Activated T-helper 2 cell treated with anti-CD3 and anti-CD28 coated beads, Interferon-gamma antibody, Interleukin-2, Interleukin-4, amounts not matched to agents 10 μg/mL and 5 μg/mL and 100 μg/mL, durations not matched to agents 14 hours and 24 hours and 36 hours (primary cell): ENCODE measurements at regions of chr18 and their contacts with region 1.

Region 1: DNA sequence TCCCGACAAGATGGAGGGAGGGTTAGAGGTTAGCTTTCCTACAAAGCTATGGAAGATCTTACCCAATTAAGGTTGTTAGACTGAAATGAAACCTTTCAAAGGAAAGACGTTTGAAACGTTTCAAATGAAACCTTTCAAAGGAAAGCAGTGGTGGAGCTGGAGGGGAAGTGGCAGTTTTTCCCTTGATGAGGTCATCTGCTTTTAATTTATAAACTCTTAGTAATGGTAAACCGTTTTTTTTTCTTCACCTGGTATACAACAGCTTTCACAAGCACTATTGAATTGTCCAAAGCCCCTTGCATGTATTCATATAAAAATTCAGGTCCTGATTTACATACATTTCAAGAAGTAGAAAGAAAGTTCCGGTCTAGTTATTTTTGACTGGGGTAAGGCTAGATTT is 7.4 kb downstream of the PMAIP1 start:
- DNase-seq: no peak
- H3K4me3 Mint-ChIP-seq: peak overlapping the region; percentile 14
- H3K27ac Mint-ChIP-seq: peak overlapping the region; percentile 77
- H3K4me1 Mint-ChIP-seq: peaks cover 64% of the 10 kb centered on the region
- H3K27me3 Mint-ChIP-seq: no peaks in the 10 kb centered on the region

Region 2: GRCh38 chr18:59041819-59042815 is 865.1 kb before region 1 on chr18:
- intact Hi-C with region 1: no loop called
- DNase-seq: no peak
- H3K4me3 Mint-ChIP-seq: no peak overlapping the region
- H3K27ac Mint-ChIP-seq: no peak overlapping the region
- H3K4me1 Mint-ChIP-seq: peaks cover 18% of the 10 kb centered on the region
- H3K27me3 Mint-ChIP-seq: no peaks in the 10 kb centered on the region

Region 3: GRCh38 chr18:59846814-59847490 is 60.2 kb before region 1 on chr18:
- intact Hi-C with region 1: loop called (anchors 1 kb)
- DNase-seq: peak; percentile 10
- H3K4me3 Mint-ChIP-seq: no peak overlapping the region
- H3K27ac Mint-ChIP-seq: peak overlapping the region; percentile 80
- H3K4me1 Mint-ChIP-seq: peaks cover 16% of the 10 kb centered on the region
- H3K27me3 Mint-ChIP-seq: peaks cover 1% of the 10 kb centered on the region

Region 4: DNA sequence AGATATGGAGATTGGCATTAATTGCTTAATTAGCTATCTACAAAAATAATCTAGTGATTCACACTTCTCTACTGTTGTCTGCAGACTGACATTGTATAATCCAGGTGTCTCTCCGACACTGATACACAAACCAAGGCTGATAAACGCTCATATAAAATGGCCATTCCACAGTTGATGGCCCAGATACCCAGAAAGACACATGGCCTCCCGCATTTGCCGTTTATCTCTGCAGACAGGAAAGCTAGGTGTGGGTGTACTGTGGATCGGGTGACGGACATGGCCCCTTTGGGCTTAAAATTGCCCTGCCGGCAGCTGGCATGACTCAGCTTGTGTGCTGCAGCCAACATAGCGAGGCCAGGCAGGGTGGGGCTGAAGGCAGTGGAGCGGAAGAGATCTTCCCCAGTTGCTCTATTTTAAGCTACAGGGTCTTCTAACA is 11.2 kb after region 1 on chr18:
- intact Hi-C with region 1: loop called (anchors 1 kb)
- DNase-seq: no peak
- H3K4me3 Mint-ChIP-seq: no peak overlapping the region
- H3K27ac Mint-ChIP-seq: peak overlapping the region; percentile 35
- H3K4me1 Mint-ChIP-seq: peaks cover 35% of the 10 kb centered on the region
- H3K27me3 Mint-ChIP-seq: no peaks in the 10 kb centered on the region

Region 5: DNA sequence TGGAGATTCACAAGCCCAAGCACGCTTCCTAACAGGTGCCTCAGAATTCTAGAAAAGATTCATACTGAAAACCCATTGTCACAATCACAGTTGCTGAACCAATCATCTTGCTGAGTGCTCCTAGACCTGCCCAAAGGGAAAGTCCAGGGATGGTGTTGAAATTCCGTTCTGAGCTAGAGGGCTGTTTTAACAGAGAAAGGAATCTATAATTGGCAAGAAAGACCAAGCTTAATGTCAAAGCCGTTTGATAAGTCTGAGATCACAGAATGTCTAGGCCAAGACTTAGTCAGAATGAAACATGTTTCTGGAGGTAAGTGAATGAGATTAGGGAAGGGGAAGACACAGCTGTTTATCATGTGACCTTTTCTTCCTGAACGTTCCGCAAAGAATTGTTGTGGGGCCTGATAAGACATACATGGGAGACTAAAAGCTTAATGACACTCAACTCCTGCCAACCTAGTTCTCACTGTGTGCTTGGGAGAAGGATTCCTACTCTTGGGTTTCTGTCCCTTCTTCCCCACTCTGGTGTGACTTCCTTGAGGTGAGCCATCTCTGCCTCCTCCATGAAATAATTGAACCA is 20.2 kb after region 1 on chr18:
- intact Hi-C with region 1: loop called (anchors 1 kb)
- DNase-seq: no peak
- H3K4me3 Mint-ChIP-seq: peak overlapping the region; percentile 34
- H3K27ac Mint-ChIP-seq: peak overlapping the region; percentile 87
- H3K4me1 Mint-ChIP-seq: peaks cover 52% of the 10 kb centered on the region
- H3K27me3 Mint-ChIP-seq: no peaks in the 10 kb centered on the region

Region 6: GRCh38 chr18:59950215-59950944 is 43.2 kb after region 1 on chr18:
- intact Hi-C with region 1: loop called (anchors 1 kb)
- DNase-seq: no peak
- H3K4me3 Mint-ChIP-seq: no peak overlapping the region
- H3K27ac Mint-ChIP-seq: peak overlapping the region; percentile 47
- H3K4me1 Mint-ChIP-seq: peaks cover 37% of the 10 kb centered on the region
- H3K27me3 Mint-ChIP-seq: peaks cover 5% of the 10 kb centered on the region

Region 7: GRCh38 chr18:59961086-59961485 is 53.9 kb after region 1 on chr18:
- intact Hi-C with region 1: loop called (anchors 2 kb)
- DNase-seq: no peak
- H3K4me3 Mint-ChIP-seq: no peak overlapping the region
- H3K27ac Mint-ChIP-seq: no peak overlapping the region
- H3K4me1 Mint-ChIP-seq: peaks cover 29% of the 10 kb centered on the region
- H3K27me3 Mint-ChIP-seq: peaks cover 20% of the 10 kb centered on the region